ENCODE measurements at regions of chr2 and their contacts with region 1.

Region 1: GRCh38 chr2:85678794-85679672 is 11.0 kb upstream of the SFTPB start:
- DNase-seq: peak; percentile 60 to 89
- H3K4me3 ChIP-seq: peak overlapping the region; percentile 41; the same call in 1 of the 2 replicates
- H3K27ac ChIP-seq: peak overlapping the region; percentile 99; the same call in 1 of the 2 replicates
- H3K4me1 ChIP-seq: peaks cover 38% of the 10 kb centered on the region
- H3K27me3 ChIP-seq: no peaks in the 10 kb centered on the region
- CTCF ChIP-seq: peak; percentile 97

Region 2: DNA sequence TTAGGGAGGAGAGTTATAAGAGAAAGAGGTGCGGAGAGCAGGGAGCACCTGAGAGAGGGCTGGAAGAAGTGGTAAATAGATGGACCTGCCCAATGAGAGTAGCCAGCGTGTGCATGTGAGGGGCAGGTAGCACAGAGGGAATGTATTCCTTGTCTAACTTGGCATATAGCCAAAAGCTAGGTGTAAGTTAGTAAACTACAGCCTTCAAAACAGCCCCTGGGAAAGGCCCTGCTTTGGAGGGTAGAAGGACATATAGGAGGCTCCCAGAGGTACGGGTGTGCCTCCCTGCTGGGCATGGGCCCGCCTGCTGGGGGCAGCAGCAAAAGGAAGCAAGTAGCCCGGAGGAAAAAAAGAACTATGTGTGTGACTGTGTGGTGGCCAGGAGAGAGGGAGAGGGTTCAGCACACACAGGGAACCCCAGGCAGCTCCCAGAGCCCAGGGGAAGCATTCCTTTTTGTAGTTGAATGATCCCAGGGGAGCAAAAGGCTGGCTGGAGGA is 497.9 kb before region 1 on chr2:
- CTCF ChIA-PET with region 1: no interaction called
- POLR2A ChIA-PET with region 1: no interaction called
- intact Hi-C with region 1: no loop called
- DNase-seq: peak in 1 of 2 experiments; percentile 11
- H3K4me3 ChIP-seq: no peak overlapping the region
- H3K27ac ChIP-seq: no peak overlapping the region
- H3K4me1 ChIP-seq: no peaks in the 10 kb centered on the region
- H3K27me3 ChIP-seq: no peaks in the 10 kb centered on the region
- CTCF ChIP-seq: 0 out of 2 replicates have a peak, but pooled peaks have one; percentile 26

Region 3: DNA sequence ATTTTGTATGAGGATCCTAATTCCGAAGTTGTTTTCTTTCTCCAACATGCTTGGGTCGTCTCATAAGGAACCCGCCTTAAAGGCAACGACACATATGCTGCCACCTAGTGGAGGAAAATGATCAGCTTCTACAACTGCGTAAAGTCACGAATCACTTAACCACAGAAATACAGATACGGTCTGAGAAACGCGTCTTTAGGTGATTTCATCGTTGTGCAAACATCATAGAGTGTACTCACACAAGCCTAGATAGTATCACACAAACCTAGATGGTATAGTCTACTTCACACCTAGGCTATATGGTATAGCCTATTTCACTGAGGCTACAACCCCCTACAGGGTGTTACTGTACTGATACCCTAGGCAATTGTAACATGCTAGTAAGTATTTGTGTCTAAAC is 28.3 kb after region 1 on chr2:
- CTCF ChIA-PET with region 1: interaction called, 28 read pairs
- POLR2A ChIA-PET with region 1: no interaction called
- intact Hi-C with region 1: loop called (anchors 1 kb)
- DNase-seq: peak; percentile 64 to 94
- H3K4me3 ChIP-seq: no peak overlapping the region
- H3K27ac ChIP-seq: peak overlapping the region; percentile 95
- H3K4me1 ChIP-seq: peaks cover 46% of the 10 kb centered on the region
- H3K27me3 ChIP-seq: no peaks in the 10 kb centered on the region
- CTCF ChIP-seq: peak; percentile 86

Region 4: GRCh38 chr2:85712849-85713602 is 34.0 kb after region 1 on chr2:
- CTCF ChIA-PET with region 1: interaction called, 28 read pairs
- POLR2A ChIA-PET with region 1: no interaction called
- intact Hi-C with region 1: no loop called
- DNase-seq: no peak
- H3K4me3 ChIP-seq: no peak overlapping the region
- H3K27ac ChIP-seq: no peak overlapping the region
- H3K4me1 ChIP-seq: peaks cover under 1% of the 10 kb centered on the region
- H3K27me3 ChIP-seq: no peaks in the 10 kb centered on the region
- CTCF ChIP-seq: no peak